ENCODE measurements at regions of chr11 and their contacts with region 1.

Region 1: DNA sequence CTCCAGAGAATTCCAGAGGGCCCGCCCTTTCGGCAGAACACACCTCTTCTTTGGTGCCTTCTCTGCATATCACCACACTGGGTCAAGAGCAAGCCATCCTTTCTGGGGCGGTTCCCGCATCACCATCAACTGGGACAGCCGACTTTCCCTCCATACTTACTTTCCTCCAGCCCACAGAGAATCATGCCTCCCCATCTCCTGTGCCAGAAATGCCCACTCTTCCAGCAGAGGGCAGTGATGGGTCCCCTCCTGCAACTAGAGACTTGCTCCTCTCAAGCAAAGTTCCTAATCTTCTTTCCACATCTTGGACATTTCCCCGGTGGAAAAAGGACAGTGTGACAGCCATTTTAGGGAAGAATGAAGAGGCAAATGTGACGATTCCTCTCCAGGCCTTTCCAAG is 157.7 kb downstream of the C11orf91 start:
- DNase-seq: peak; percentile 51
- H3K4me3 ChIP-seq: no peak overlapping the region
- H3K27ac ChIP-seq: no peak overlapping the region
- H3K4me1 ChIP-seq: peaks cover 42% of the 10 kb centered on the region
- CTCF ChIP-seq: peak; percentile 82

Region 2: DNA sequence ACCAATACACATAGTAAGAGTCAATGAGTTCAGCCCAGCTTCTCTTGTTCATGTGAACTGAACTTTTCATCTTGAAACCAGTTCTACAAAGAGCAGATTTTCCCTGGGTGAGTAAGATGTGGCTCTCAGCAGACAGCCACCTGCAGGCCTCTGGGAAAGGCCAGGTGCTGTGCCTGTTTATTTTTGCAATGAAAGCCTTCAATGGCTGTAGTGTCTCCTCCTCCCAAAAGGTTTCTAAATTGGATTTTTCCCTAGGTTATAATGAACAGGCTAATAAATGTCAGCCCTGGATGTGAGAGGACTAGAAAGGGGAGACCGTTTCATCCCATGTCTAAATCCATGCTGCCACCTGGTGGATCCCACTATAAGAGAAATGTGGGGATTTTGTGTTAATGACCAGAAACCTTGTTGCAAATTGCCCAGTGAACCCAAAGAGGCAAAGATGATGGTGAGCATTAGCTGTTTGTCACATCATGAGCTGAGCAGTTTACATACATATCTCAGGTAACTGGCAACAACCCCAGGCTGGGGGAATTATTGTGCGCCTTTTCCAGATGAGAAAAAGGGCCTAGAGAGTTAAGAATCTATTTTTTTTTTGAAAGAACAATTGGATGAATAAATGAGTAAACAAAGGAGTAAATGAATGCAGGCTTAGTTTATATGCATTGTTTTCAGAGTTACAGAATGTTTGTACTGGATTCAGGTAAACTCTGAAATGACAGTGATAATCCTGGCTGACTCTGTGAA is 145.0 kb after region 1 on chr11:
- CTCF ChIA-PET with region 1: no interaction called
- POLR2A ChIA-PET with region 1: no interaction called
- intact Hi-C with region 1: loop called (anchors 5 kb)
- DNase-seq: peak; percentile 74
- H3K4me3 ChIP-seq: no peak overlapping the region
- H3K27ac ChIP-seq: no peak overlapping the region
- H3K4me1 ChIP-seq: peaks cover 4% of the 10 kb centered on the region
- CTCF ChIP-seq: peak; percentile 97

Region 3: GRCh38 chr11:34105079-34105956 is 562.4 kb after region 1 on chr11 and contains the start of gene NAT10:
- CTCF ChIA-PET with region 1: no interaction called
- POLR2A ChIA-PET with region 1: no interaction called
- intact Hi-C with region 1: no loop called
- DNase-seq: peak; percentile 99
- H3K4me3 ChIP-seq: peak within 1 kb of the TSS; percentile 88
- H3K27ac ChIP-seq: peak within 1 kb of the TSS; percentile 86
- H3K4me1 ChIP-seq: peaks cover 47% of the 10 kb centered on the region
- CTCF ChIP-seq: 0 out of 2 replicates have a peak, but pooled peaks have one; percentile 20
- total RNA-seq, gene NAT10: 62.5 and 64.9 TPM in 2 replicates

Measured in OCI-LY7 (cell line).